GM10248 (cell line): ENCODE measurements at regions of chr5 and their contacts with region 1.

Region 1: DNA sequence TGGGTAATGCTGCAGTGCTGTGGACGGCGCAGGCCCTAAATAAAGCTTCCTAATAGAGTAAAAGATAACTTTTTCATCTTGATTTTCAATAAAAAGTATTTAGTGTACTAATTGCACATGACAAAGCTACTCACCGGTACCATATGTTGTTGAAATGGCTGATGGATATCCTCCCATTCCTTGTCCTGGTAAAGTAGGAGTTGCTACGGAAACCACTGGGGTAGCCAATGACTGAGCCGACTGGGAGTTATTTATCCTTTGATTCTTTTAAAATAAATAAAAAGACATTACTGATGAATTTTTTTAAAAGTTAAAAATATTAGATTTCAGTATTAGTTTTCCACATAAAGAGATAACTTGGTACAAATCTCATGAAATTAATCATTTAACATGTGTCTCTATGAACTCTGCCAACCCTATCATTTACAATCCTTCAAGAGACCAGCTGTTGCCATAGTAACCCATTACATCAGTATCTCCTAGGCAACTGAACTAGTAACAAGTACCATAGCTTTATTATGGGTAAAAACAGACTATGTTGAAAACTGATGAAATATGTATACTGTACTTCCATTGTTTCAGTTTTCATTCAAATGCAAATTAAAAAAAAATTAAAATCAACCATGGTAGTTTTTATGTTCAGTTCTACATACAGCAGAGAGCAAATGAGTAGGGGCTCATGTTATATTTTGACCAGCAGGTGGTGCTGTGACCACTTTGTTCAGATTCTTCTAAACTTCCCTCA is 153.7 kb downstream of the MEF2C start:
- DNase-seq: no peak
- CTCF ChIP-seq: peak; percentile 63

Region 2: DNA sequence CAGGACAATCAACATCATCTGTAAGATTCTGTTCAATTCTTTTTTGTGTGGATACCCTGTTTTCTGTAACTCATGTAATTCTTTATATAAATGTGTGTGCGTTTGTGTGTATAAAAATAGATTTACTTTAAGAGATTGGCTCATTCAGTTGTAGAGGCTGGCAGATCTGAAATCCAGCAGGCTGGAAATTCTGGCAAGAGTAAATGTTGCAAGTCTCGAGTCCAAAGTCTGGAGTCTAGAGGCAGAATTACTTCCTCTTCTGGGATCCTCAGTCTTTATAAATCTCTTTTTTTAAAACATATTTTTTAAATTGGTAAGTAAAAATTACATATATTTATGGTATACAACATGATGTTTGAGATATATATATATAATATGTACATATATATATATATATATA is 258.5 kb before region 1 on chr5:
- CTCF ChIA-PET with region 1: no interaction called
- POLR2A ChIA-PET with region 1: no interaction called
- DNase-seq: no peak
- CTCF ChIP-seq: no peak

Region 3: DNA sequence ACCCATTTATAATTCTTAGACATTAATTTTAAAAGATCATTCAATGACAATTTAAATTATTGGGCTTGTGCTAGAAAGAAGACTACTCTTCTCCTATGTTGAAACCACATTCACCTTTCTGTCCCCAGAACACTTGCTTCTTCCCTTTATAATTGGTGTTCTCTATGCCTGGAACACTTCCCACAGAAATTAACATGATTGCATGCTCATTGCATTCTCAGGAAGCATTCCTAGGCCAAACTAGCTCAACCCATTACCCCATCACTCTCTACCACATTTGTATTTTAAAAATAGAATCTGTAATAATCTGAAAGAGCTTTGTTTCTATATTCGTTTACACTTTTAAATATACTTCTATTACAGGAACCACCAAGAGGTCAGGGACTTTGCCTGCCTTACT is 31.0 kb before region 1 on chr5:
- CTCF ChIA-PET with region 1: no interaction called
- POLR2A ChIA-PET with region 1: no interaction called
- DNase-seq: no peak
- CTCF ChIP-seq: no peak

Region 4: DNA sequence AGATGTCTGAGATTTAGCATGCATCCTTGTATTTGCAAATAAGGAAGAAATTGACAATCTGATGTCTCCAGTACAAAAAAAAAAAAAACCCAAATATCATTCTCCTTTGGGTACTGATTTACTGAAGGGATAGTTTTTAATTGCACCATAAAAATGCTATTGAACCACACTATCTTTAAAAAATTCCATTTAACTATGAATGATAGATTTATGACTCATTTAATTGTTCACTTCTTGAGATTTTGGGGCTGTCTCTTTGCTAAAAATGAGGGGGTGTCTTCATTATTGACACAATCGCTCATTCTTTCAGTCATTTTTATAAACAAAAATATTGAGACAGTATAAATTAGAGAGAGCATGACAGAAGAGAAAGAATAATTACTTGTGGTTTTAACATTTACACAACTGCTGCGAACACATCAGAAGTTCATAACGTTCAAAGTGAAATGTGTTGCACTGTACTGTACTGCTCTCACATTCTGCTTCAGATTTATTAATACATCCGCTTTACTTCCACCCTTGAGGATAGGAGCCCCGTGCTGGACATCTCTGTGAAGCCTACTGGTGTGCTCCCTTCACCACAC is 11.4 kb after region 1 on chr5:
- CTCF ChIA-PET with region 1: interaction called, 22 read pairs
- POLR2A ChIA-PET with region 1: no interaction called
- DNase-seq: no peak
- CTCF ChIP-seq: no peak

Region 5: DNA sequence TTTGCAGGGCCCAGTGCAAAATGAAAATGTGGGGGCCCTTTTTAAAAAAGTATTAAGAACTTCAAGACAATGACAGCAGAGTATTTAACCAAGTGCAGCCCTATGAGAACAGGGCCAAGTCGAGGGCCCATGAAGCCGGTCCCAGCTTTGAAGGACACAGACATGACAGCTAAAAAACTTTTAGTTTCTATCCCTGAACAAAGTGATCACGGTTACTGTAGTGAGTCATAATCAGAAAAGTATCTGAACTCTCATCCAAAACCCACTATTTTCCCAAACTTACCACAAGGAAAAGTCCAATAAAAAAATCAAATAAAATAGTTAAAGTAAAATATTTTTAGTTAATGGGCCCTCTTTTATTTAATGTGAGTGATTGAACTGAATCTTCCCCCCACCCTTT is 27.7 kb after region 1 on chr5:
- CTCF ChIA-PET with region 1: interaction called, 12 read pairs
- POLR2A ChIA-PET with region 1: no interaction called
- DNase-seq: no peak
- CTCF ChIP-seq: no peak

Region 6: DNA sequence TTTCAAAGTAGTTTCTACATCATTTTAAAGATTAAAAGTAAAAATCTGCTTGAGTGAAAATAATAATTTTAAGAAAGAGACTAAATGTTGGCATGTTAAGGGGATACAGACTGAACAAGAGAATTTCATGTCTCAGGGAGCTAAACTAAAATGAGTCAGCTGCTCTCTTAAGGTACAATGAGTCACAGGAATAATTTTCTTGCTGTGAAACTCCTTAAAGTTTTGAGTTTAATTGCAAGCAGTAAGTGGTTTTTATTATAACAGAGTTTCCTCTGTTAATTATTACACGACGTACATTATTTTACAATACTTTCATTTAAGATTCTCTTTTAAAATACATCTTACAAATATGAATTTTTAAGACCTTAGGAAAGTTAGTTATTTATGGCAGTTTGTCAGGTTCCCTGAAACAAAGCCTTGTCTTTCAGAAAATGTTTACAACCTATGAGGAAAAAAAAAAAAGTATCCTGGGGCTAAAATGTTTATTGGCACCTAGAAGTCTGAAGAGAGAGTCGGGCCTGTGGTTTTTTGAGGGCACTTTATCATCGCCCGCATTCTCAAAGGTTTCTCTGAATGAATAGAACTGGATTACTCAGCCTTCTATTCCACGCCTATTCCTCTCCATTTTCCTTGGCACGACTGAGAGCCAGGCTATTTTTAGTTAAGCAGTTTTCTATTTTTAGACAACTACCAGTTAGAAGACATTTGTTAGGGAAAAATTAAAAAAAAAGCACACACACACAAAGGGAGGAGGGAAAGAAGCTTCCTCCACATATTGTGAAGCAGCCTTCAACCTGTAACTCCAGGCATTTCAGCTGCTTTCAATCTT is 56.3 kb after region 1 on chr5:
- CTCF ChIA-PET with region 1: interaction called, 11 read pairs
- POLR2A ChIA-PET with region 1: no interaction called
- DNase-seq: no peak
- CTCF ChIP-seq: no peak

Region 7: DNA sequence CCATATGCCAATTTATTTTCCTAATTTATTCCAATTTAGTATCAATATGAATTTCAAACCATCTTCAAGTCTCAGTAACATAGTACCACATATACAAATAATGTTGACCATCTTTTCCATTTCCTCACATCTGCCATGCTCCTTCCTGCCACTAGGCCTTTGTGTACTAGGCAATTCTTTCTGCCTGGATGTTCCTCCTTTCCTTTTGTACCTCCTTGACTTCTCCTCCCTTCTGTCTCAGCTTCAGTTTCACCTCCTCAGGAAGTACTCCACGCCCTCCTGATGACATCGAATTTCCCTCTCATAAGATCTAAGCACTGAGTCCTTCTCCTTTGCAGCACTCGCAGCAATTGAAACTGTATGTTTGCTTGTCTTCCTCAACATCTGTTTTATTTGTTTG is 99.8 kb after region 1 on chr5:
- CTCF ChIA-PET with region 1: interaction called, 12 read pairs
- POLR2A ChIA-PET with region 1: no interaction called
- DNase-seq: no peak
- CTCF ChIP-seq: peak; percentile 10

Region 8: DNA sequence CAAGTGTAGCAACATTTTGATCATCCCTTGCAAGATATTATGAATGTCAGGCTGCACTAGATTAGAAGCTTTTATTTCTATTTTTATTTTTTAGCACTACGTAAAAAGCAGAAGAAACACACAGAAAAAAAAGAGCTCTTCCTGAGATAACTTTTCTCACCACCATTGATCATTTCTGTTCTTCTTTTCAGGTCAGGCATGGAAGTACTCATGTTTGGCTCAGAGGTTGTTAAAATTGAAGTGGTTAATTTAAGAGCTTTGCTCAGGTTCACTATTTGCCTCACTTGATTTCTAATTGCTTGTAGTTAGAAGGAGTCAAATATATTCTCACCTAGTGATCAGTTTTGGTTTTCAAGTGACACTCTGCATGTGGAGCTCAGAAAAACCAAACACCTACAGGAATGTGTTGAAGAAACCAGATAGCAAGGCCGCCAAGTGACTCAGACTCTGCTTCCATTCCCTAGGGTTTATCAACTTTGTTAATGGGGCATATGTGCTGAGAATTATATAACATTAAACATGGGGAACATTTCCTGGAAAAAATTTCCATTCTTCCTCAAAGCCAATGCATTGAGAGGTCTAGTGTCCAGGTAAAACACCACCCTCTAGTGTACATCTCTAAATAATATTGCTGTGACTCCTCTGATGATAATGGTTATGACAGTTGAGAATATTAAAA is 1000.5 kb after region 1 on chr5:
- CTCF ChIA-PET with region 1: interaction called, 14 read pairs
- POLR2A ChIA-PET with region 1: no interaction called
- DNase-seq: no peak
- CTCF ChIP-seq: no peak